Heart left ventricle (tissue), 16 donors: ENCODE measurements at regions of chr17 and their contacts with region 1.

Region 1: DNA sequence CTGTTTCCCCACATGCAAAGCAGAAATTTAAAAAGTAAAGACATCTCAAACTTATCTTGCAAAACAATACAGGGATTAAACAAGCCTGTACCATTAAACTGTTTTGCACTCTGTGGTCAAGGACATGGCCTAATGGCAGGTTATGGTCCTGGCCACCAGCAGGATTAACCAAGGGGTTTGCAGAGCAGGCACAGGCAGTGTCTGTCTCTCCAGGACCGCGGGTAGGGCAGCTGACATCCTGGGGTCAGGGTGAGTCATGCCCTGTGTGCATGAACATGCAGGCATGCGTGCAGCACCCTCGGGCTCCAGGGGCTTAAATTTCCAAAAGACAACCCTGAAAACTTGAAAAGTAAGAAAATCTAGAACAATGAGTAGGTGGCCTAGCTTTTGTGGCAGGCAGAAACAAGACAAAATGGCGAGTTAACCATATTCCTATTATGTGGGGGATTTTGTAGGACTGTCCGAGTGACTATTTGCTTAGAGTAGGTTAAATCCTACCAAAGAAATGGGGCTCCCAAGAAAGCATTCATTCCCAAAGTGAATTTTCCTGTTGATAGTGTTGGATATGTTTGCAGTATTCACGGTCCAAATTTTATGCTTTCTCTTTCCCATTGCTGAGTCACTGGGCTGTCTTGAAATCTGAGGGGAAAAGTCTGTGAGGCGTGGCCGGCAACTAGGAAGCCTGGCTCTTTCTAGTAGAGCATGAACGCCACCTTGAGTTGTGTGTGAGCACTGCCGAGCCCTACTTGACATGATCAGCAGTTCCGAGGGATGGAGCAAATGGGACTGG is 158.4 kb upstream of the FAM20A start:
- DNase-seq: peak; percentile 86 to 92 (median 86)
- ATAC-seq: peak; percentile 96 to 100 (median 98)
- H3K4me3 ChIP-seq: peak overlapping the region in 10 of 12 donors; percentile 17 to 54 (median 37)
- H3K27ac ChIP-seq: peak overlapping the region; percentile 30 to 95 (median 78)
- H3K4me1 ChIP-seq: peaks cover 0 to 15% (median 6%) of the 10 kb centered on the region in 12 donors
- H3K27me3 ChIP-seq: no peaks in the 10 kb centered on the region
- CTCF ChIP-seq: peak; percentile 74 to 96 (median 87)
- POLR2A ChIP-seq: no peak

Region 2: DNA sequence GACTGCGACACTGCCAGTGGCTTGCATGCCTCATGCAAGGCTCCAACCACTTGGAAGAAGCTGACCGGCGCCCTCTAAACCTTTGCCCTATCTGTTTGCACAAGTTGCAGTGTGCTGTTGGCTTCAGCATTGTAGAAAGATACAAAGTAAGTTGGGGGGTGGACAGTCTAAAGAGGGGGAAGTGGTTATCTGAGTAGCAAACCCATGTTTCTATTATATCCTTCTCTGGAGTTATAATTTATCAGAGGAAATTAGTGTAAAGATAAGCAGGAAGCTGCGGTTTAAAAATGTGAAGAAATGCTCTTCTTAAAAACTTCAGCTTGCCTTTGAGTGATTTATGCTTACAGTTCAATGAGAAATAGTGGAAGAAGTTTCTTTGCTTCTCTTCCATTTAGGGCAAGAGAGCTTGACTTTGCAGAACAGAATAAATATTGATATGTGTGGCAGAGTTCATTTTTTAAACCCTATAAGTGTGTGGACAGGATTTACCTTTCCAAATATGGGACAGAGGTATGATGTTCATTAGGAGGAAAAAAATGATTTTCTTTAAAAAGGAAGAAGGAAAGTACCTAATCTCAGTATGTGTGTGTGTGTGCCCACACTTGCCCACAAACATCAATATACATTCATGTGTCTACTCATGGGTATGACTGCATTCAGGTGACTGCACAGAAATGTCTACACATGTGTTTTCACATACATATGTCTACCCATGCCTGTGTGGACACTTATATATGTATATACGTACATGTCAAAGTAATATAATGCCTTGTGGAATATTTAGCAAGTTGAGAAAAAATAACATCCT is 503.6 kb before region 1 on chr17:
- intact Hi-C with region 1: loop called in 3 of 10 experiments (anchors 5 to 10 kb)
- DNase-seq: no peak
- ATAC-seq: no peak
- H3K4me3 ChIP-seq: no peak overlapping the region
- H3K27ac ChIP-seq: peak overlapping the region in 1 of 12 donors; percentile 64
- H3K4me1 ChIP-seq: peaks cover 0 to 51% (median 10%) of the 10 kb centered on the region in 12 donors
- H3K27me3 ChIP-seq: no peaks in the 10 kb centered on the region
- CTCF ChIP-seq: no peak
- POLR2A ChIP-seq: no peak

Region 3: DNA sequence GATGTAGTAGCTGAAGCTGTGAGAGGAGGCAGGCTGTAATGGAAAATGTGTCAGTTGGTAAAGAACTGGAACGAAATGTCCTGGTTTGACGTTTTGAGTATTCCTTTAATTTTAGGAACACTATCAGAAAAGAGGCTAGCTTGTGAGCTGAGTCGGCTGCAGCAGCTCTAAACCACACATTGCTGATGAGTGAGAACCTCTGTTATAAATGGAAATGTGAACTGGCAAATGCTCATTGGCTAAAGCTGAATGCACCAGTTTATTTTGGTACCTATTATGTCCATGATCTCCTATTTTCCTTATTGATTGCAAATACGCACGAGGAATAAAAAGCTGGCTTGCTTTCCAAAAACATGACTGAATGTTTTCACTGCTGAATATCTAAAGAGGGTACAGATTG is 291.2 kb before region 1 on chr17:
- intact Hi-C with region 1: loop called in 7 of 10 experiments (anchors 5 to 10 kb)
- DNase-seq: peak in 4 of 5 donors; percentile 43 to 60 (median 46)
- ATAC-seq: peak; percentile 82 to 91 (median 90)
- H3K4me3 ChIP-seq: no peak overlapping the region
- H3K27ac ChIP-seq: peak overlapping the region; percentile 71 to 97 (median 90)
- H3K4me1 ChIP-seq: peaks cover 0 to 27% (median 6%) of the 10 kb centered on the region in 12 donors
- H3K27me3 ChIP-seq: no peaks in the 10 kb centered on the region
- CTCF ChIP-seq: no peak
- POLR2A ChIP-seq: no peak

Region 4: GRCh38 chr17:68539548-68540467 is 219.7 kb before region 1 on chr17:
- intact Hi-C with region 1: loop called in 9 of 10 experiments (anchors 5 to 10 kb)
- DNase-seq: no peak
- ATAC-seq: peak; percentile 5 to 27 (median 16)
- H3K4me3 ChIP-seq: no peak overlapping the region
- H3K27ac ChIP-seq: peak overlapping the region in 9 of 12 donors; percentile 6 to 60 (median 39)
- H3K4me1 ChIP-seq: peaks cover 0 to 27% (median 14%) of the 10 kb centered on the region in 12 donors
- H3K27me3 ChIP-seq: no peaks in the 10 kb centered on the region
- CTCF ChIP-seq: peak in 7 of 12 donors; percentile 11 to 39 (median 27)
- POLR2A ChIP-seq: no peak

Region 5: DNA sequence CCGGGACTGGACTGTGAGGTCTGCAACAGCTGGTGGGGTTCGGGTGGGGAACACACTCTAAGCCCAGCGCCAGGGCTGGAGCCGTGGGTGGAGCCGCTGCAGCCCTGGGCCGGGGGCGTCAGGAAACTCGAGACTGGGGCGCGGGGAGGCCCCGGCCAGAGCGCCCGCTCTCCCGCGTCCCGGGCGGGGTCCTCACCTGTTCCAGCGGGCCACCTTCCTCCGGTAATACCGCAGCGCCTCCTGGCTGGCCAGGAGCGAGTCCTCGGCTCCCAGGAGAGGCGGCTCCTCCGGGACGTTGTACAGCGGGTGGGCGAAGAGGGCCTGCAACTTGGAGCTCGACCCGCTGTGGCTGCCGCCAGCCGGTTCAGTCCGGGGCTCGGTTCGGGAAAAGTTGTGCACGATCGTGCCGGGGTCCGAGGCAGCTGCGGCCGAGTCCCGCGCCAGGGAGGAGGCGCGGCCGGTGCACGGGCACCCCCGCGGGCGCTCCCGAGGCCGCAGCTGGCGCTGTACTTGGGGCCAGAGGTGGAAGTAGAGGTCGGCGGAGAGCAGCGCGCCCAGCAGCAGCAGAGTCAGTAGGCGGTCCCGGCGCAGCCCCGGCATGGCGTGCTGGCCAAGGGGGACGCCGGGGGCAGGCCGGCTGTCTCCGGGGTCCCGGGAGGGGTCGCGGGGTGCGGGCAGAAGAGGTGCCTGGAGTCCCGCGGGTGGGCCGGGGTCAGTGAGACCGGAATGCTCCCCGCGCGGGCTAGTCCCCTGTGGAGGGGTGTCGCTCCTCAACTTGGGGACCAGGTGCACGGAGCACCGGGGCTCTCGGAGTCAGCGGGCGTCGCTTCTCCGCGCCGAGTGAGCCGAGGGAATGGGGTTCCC is 159.2 kb before region 1 on chr17:
- intact Hi-C with region 1: loop called in 2 of 10 experiments (anchors 5 to 10 kb)
- DNase-seq: peak; percentile 39 to 84 (median 68)
- ATAC-seq: peak in 3 of 4 donors; percentile 45 to 73 (median 72)
- H3K4me3 ChIP-seq: peak overlapping the region; percentile 64 to 97 (median 76)
- H3K27ac ChIP-seq: peak overlapping the region; percentile 72 to 98 (median 76)
- H3K4me1 ChIP-seq: peaks cover 0 to 55% (median 17%) of the 10 kb centered on the region in 12 donors
- H3K27me3 ChIP-seq: peaks cover 0 to 15% (median 0%) of the 10 kb centered on the region in 9 donors
- CTCF ChIP-seq: peak in 9 of 12 donors; percentile 12 to 53 (median 34)
- POLR2A ChIP-seq: no peak